Pancreas (tissue), 10 donors: ENCODE measurements at regions of chr3 and their contacts with region 1.

Region 1: DNA sequence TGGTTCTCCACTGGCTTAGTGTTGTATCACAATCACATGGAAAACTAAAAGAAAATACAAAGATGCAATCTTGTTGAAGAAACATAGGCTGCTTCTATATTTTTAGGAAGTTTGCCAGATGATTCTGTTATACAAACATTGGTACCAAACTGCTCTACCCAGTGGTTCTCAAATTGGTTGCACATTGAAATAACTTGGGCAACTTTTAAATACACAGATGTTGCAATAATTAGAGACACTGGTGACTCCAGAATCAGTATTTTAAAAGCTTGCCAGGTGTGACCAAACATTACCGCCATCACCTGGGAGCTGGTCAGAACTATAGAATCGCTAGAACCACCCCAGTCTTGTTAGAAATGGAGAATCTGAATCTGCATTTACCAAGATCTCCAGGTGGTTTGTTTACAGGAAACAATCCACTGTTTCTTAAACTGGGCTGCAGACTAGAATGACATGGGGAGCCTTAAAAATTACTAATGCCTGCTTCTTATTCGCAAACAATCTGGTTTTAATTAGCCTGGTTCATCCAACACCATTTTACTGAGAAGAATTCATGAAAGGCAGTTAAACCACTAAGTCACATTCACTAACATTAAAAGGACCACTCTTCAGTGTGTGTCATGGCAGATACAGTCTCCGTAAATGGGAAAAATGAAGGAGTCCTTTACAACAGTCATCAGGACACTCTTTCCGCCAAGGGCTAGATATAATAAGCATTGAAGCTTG is 76.5 kb downstream of the ACAP2 start:
- DNase-seq: no peak
- ATAC-seq: no peak
- H3K4me3 ChIP-seq: no peak overlapping the region
- H3K27ac ChIP-seq: no peak overlapping the region
- H3K4me1 ChIP-seq: no peaks in the 10 kb centered on the region
- H3K27me3 ChIP-seq: no peaks in the 10 kb centered on the region
- CTCF ChIP-seq: no peak

Region 2: GRCh38 chr3:195319060-195319459 is 47.3 kb before region 1 on chr3:
- intact Hi-C with region 1: loop called in 1 of 3 experiments (anchors 10 kb)
- DNase-seq: no peak
- ATAC-seq: no peak
- H3K4me3 ChIP-seq: no peak overlapping the region
- H3K27ac ChIP-seq: no peak overlapping the region
- H3K4me1 ChIP-seq: no peaks in the 10 kb centered on the region
- H3K27me3 ChIP-seq: no peaks in the 10 kb centered on the region
- CTCF ChIP-seq: no peak